Mammary epithelial cell (primary cell): ENCODE measurements at regions of chr6 and their contacts with region 1.

Region 1: DNA sequence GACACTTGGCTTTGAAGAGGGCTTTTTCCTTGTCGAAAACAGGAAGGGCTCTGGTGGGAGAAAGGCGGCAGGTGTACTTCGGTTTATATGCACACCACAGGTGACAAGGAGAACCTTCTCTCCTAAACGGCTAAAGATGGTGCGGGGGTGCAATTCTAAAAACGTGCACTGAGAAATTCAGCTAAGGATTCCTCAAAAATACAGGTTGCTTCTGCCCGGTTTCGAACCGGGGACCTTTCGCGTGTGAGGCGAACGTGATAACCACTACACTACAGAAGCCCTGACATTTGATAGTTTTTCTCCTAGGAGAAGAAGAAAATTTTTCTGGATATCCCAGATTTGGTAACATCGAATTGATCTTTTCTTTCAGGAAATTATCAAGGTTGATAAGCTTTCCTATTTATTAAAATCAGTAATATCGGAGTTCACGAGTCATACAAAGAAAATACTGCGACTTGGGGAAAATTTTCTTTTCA is 32.0 kb downstream of the POM121L2 start:
- DNase-seq: peak; percentile 63
- H3K4me3 ChIP-seq: peak overlapping the region; percentile 41 to 95 (median 55)
- H3K27ac ChIP-seq: no peak overlapping the region
- H3K4me1 ChIP-seq: peaks cover 12% of the 10 kb centered on the region
- H3K27me3 ChIP-seq: no peaks in the 10 kb centered on the region
- CTCF ChIP-seq: no peak

Region 2: GRCh38 chr6:27295301-27296081 is 15.4 kb after region 1 on chr6:
- CTCF ChIA-PET with region 1: no interaction called
- dilution Hi-C with region 1: no loop called
- in situ Hi-C with region 1: no loop called
- intact Hi-C with region 1: loop called (anchors 1 kb)
- DNase-seq: peak; percentile 82
- H3K4me3 ChIP-seq: peak overlapping the region; percentile 54 to 77 (median 63)
- H3K27ac ChIP-seq: no peak overlapping the region
- H3K4me1 ChIP-seq: peaks cover 4% of the 10 kb centered on the region
- H3K27me3 ChIP-seq: no peaks in the 10 kb centered on the region
- CTCF ChIP-seq: no peak

Region 3: DNA sequence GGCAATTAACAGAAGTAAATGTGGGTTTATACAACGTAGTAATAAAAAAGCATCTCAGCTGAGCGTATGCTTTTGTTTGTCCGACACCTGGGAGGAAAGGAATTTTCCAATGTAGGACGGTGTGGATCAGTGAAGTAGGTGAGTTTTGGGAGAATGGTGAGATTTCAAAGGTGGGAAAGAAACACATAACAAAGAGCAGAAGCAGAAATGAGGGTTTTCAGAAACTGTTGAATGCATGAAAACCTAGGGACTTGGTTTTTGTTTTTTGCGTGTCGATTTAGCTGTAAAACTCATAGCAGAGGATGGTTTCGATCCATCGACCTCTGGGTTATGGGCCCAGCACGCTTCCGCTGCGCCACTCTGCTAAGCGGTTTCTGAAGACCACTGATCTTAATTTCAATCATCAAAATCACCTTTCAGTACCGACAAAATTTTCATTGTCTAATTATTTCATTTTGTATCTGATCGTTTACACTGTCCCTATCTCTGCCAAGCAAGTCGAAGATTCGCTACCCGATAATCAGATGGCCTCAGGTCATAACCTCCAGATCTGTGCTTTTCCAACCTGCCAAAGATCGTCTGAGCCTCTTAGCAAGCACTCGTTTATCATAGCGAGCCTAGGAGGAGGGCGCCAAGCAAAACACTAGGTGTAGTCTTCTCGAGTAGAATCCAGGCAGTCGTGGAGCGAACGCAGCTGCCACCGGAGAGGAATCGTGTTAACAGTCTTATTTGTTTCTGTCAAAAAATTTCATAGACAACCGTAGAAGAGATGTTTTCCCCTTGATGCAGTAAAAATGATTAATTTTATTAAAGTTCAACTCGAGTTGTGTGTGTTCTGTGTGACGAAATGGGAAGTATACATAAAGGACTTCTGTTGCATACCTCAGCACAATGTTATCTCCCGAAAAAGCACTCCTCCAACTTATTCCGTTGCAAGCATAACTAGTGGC is 52.9 kb after region 1 on chr6:
- CTCF ChIA-PET with region 1: no interaction called
- dilution Hi-C with region 1: no loop called
- in situ Hi-C with region 1: no loop called
- intact Hi-C with region 1: loop called (anchors 10 kb)
- DNase-seq: peak; percentile 76
- H3K4me3 ChIP-seq: peak overlapping the region; percentile 45 to 76 (median 72)
- H3K27ac ChIP-seq: no peak overlapping the region
- H3K4me1 ChIP-seq: peaks cover 3% of the 10 kb centered on the region
- H3K27me3 ChIP-seq: no peaks in the 10 kb centered on the region
- CTCF ChIP-seq: no peak